Naive thymus-derived CD4-positive, alpha-beta T cell (primary cell): ENCODE measurements at regions of chr19 and their contacts with region 1.

Region 1: DNA sequence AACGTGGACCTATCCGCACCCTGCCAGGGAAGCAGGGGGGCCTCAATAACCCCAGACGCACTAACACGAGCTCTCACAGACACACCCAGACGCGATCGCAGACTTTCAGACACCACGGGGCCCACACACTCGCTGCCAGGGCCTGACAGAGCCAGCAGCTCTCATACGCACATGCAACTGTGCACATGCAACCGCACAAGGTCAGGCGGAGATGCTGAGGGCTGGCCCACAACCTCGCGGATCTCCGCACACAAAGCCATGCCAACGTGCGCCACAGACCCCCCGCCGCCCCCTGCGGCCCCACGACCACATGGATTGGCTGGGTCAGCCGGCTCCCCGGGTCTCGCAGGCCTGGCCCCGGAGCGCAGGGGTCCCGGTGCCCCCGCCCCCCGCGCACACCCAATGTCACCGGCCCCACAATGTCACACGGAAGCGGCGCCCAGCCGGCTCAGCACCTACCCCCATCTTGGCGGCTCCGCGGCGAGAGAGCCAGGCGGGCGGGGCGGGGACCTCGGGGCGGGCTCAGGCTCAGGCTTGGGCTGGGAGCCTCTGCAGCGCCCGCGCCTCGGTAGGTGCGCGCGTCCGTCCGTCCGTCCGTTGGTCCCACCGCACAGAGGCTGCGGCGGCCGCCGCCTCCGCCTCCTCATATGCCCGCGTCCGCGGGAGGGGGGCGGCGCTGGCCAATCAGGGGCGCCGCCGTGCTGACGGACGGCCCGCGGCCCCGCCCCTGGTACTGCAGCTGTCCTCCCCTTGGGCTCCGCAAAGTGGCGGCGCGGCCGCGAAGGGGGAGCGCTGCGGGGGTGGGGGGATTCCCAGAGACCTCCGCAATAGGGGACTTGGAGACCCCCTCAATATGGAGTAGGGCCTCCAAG is at the start of gene ATP1A3:
- DNase-seq: peak; percentile 21 to 69 (median 53)
- ATAC-seq: peak; percentile 86
- H3K4me3 ChIP-seq: peak within 1 kb of the TSS; percentile 74
- H3K4me3 Mint-ChIP-seq: peak within 1 kb of the TSS; percentile 79 to 92 (median 87)
- H3K27ac ChIP-seq: peak within 1 kb of the TSS; percentile 23
- H3K27ac Mint-ChIP-seq: peak within 1 kb of the TSS in 7 of 9 donors; percentile 24 to 82 (median 51)
- H3K4me1 ChIP-seq: peaks cover 6 to 12% of the 10 kb centered on the region in 2 donors
- H3K4me1 Mint-ChIP-seq: peaks cover 18 to 42% (median 38%) of the 10 kb centered on the region in 7 donors
- H3K27me3 ChIP-seq: peaks cover 3 to 16% of the 10 kb centered on the region in 2 donors
- H3K27me3 Mint-ChIP-seq: peaks cover 33 to 48% (median 35%) of the 10 kb centered on the region in 5 donors
- total RNA-seq, gene ATP1A3: 1.3 to 5.0 (median 2.9) TPM

Region 2: DNA sequence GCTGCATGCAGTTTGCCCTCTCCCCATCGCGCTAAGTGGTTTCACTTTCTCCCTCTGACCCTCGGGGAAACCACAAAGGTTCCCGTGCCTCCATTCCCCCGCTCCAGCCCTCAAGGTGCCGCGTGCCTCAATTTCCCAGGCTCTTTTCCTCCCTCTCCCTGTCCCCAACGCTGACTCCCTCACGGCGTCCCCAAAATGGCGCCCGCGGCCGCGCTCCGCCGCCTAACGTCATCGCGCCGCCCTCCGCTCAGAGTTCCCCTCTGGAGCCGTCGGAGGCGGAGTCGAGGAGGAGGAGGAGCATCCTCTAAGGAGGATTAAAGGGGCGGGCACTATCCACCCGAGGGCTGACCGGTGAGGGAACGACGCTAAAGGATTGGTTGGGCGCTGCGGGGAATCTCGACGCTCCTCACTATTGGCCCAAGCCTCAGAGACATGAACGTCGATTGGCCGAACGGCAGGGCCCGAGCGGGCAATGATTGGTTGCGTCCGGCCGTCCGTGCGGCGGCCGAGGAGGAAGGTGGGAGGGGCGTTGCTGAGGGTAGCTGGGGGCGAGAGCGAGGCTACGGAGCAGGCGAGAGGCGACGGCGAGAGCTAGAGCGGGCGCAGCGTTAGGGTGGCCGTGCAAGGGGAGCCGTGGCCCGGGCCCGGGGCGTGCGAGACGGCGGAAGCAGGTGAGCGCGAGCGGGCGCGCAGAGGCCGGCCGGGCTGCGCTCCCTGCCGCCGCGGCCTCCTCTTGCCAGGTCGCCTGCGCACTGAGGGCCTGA is 82.0 kb after region 1 on chr19 and contains the start of gene ZNF574:
- CTCF ChIA-PET with region 1: no interaction called
- POLR2A ChIA-PET with region 1: no interaction called
- intact Hi-C with region 1: loop called in 1 of 2 experiments (anchors 1 kb)
- DNase-seq: peak; percentile 91 to 99 (median 98)
- ATAC-seq: peak; percentile 98
- H3K4me3 ChIP-seq: peak within 1 kb of the TSS; percentile 70
- H3K4me3 Mint-ChIP-seq: peak within 1 kb of the TSS; percentile 92 to 100 (median 98)
- H3K27ac ChIP-seq: peak within 1 kb of the TSS; percentile 97
- H3K27ac Mint-ChIP-seq: peak within 1 kb of the TSS; percentile 99 to 100 (median 100)
- H3K4me1 ChIP-seq: peaks cover 19 to 24% of the 10 kb centered on the region in 2 donors
- H3K4me1 Mint-ChIP-seq: peaks cover 26 to 44% (median 38%) of the 10 kb centered on the region in 7 donors
- H3K27me3 ChIP-seq: no peaks in the 10 kb centered on the region
- H3K27me3 Mint-ChIP-seq: peaks cover 0 to 13% (median 0%) of the 10 kb centered on the region in 5 donors
- total RNA-seq, gene ZNF574: 17.6 to 26.7 (median 20.9) TPM